ENCODE measurements at regions of chr4 and their contacts with region 1.

Region 1: GRCh38 chr4:152850377-152850776 is 70.6 kb downstream of the ARFIP1 start:
- DNase-seq: peak in 1 of 2 donors; percentile 46
- ATAC-seq: peak; percentile 76 to 85 (median 77)
- H3K4me3 ChIP-seq: no peak overlapping the region
- H3K4me3 Mint-ChIP-seq: peak overlapping the region; percentile 52
- H3K27ac ChIP-seq: no peak overlapping the region
- H3K27ac Mint-ChIP-seq: peak overlapping the region; percentile 9 to 68
- H3K4me1 ChIP-seq: peaks cover 3% of the 10 kb centered on the region
- H3K4me1 Mint-ChIP-seq: peaks cover 14 to 23% of the 10 kb centered on the region in 2 donors
- H3K27me3 ChIP-seq: no peaks in the 10 kb centered on the region
- H3K27me3 Mint-ChIP-seq: no peaks in the 10 kb centered on the region
- CTCF ChIP-seq: no peak

Region 2: GRCh38 chr4:153127760-153128494 is 277.6 kb after region 1 on chr4:
- intact Hi-C with region 1: loop called (anchors 1 kb)
- DNase-seq: peak; percentile 73 to 91
- ATAC-seq: peak; percentile 84 to 93 (median 91)
- H3K4me3 ChIP-seq: no peak overlapping the region
- H3K4me3 Mint-ChIP-seq: no peak overlapping the region
- H3K27ac ChIP-seq: no peak overlapping the region
- H3K27ac Mint-ChIP-seq: peak overlapping the region in 1 of 2 donors; percentile 56
- H3K4me1 ChIP-seq: peaks cover 3% of the 10 kb centered on the region
- H3K4me1 Mint-ChIP-seq: peaks cover 6 to 9% of the 10 kb centered on the region in 2 donors
- H3K27me3 ChIP-seq: no peaks in the 10 kb centered on the region
- H3K27me3 Mint-ChIP-seq: peaks cover 5 to 14% of the 10 kb centered on the region in 2 donors
- CTCF ChIP-seq: peak; percentile 87